Left cardiac atrium (tissue), 4 donors: ENCODE measurements at regions of chr2 and their contacts with region 1.

Region 1: DNA sequence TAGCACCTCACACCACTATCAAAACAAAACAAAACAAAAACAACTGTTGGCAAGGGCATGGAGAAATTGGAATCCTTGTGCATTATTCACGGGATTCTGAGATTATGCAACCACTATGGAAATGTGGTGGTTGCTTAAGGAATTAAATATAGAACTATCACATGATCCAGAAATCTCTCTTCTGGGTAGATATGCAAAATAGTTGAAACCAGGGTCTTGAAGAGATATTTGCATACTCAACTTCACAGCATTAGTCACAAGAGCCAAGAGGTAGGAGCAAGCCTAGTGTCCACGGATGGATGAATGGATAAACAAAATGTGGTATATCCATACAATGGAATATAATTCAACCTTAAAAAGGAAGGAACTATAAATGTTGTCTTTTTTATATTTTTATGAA is 7.0 kb downstream of the TMEM131 start:
- DNase-seq: no peak
- ATAC-seq: no peak

Region 2: DNA sequence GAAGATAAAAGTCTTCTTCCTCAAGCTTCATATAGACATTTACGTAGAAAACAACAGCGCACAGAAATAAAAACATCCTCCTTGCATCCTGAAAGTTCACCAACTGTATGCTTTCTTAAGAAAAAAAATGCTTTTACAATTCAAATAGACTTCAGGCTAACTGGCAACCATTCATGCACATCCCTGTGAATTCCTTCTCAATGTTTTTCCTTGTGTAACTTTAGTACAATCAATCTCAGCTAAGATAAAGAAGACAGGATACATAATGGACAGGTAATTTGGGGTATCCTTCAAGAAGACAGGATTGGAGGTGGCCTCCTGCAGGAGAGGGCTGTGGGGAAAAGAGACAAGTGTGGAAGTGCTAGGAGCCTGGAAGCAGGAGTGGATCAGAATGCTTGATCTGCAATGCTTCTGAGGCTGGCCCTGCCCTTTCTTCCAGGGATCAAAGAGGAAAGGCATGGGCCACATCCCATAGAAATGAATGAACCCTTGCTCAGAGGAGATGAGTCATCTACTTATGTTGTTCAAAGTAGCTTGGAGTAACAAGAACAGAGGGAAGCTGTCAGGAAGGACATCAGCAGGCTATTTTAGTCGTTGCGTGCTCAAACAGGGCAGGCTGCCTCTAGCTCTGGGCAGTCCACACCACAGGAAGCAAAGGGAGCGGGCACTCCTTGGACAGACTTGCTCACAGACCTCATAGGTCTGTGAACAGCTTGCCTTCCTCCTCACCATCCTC is 119.6 kb before region 1 on chr2:
- intact Hi-C with region 1: loop called in 1 of 2 experiments (anchors 10 kb)
- DNase-seq: peak; percentile 56
- ATAC-seq: peak; percentile 82 to 96